CD14-positive monocyte (primary cell): ENCODE measurements at regions of chr15 and their contacts with region 1.

Region 1: DNA sequence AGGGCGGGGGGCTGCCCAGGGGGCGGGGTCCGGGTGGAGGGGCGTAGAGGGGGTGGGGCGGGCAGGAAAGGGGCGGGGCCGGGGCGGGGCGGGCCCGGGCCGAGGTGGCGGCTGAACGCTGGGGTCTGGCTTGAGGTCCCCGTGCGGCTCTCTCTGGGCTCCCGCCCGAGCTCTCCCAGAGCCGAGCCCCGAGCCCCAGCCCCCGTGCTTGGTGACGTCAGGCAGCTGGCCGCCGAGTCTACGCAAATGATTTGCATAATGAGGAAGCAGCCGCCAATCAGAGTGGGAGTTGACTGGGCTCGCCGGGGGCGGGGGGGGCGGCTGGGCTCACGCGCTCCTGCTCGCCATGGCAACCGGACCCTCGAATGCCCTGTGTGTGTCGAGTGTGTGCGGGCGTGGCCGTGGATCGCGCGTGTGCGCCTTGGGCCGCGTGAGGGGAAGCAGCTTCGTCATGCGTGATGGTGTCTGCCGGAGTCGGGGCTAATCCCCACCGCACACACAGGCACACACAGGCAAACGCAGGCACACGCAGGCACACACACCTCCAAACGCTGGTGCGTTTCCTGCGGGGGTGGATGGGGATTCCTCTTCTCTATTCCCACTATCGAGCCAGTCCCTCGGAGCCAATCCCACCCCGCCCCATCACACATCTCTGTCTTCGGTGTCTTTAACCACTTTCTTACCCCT is at the start of gene CELF6:
- DNase-seq: peak; percentile 87 to 96 (median 91)
- H3K4me3 ChIP-seq: peak within 1 kb of the TSS; percentile 22 to 63 (median 26)
- H3K4me3 Mint-ChIP-seq: peak within 1 kb of the TSS; percentile 75 to 89
- H3K27ac ChIP-seq: peak within 1 kb of the TSS in 1 of 2 donors; percentile 20
- H3K27ac Mint-ChIP-seq: peak within 1 kb of the TSS; percentile 15 to 92 (median 85)
- H3K4me1 ChIP-seq: peaks cover 8% of the 10 kb centered on the region in 2 donors
- H3K4me1 Mint-ChIP-seq: peaks cover 20% of the 10 kb centered on the region
- H3K27me3 ChIP-seq: peaks cover 0 to 11% of the 10 kb centered on the region in 2 donors
- H3K27me3 Mint-ChIP-seq: peaks cover 19 to 22% (median 20%) of the 10 kb centered on the region in 3 donors
- CTCF ChIP-seq: no peak
- polyA plus RNA-seq, gene CELF6: 2.9 TPM in 1 of 3 donors, not detected in the others

Region 2: DNA sequence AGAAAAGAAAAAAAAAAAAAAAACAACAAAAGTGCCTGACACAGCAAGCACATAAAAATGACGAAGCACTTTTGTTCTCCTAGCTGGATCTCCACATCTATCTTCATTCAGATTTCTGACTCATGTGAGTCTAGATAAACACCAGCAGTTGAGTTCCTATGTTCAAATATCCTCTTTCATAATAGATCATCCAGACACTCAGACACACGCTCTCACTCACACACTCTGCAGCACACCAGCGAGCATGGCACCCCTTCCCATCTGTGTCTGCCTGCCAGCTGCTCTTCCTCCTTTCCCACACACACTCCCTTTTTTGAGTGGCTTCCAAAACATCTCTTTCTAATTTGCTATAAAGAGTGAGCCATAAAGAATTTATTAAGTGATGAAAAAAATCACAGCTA is 19.6 kb after region 1 on chr15:
- intact Hi-C with region 1: loop called (anchors 1 to 2 kb)
- DNase-seq: peak; percentile 63 to 82 (median 72)
- H3K4me3 ChIP-seq: no peak overlapping the region
- H3K4me3 Mint-ChIP-seq: no peak overlapping the region
- H3K27ac ChIP-seq: peak overlapping the region; percentile 26 to 79
- H3K27ac Mint-ChIP-seq: peak overlapping the region in 6 of 7 donors; percentile 86 to 97 (median 96)
- H3K4me1 ChIP-seq: peaks cover 18 to 20% of the 10 kb centered on the region in 2 donors
- H3K4me1 Mint-ChIP-seq: peaks cover 27% of the 10 kb centered on the region
- H3K27me3 ChIP-seq: no peaks in the 10 kb centered on the region
- H3K27me3 Mint-ChIP-seq: peaks cover 0 to 3% (median 0%) of the 10 kb centered on the region in 3 donors
- CTCF ChIP-seq: no peak

Region 3: DNA sequence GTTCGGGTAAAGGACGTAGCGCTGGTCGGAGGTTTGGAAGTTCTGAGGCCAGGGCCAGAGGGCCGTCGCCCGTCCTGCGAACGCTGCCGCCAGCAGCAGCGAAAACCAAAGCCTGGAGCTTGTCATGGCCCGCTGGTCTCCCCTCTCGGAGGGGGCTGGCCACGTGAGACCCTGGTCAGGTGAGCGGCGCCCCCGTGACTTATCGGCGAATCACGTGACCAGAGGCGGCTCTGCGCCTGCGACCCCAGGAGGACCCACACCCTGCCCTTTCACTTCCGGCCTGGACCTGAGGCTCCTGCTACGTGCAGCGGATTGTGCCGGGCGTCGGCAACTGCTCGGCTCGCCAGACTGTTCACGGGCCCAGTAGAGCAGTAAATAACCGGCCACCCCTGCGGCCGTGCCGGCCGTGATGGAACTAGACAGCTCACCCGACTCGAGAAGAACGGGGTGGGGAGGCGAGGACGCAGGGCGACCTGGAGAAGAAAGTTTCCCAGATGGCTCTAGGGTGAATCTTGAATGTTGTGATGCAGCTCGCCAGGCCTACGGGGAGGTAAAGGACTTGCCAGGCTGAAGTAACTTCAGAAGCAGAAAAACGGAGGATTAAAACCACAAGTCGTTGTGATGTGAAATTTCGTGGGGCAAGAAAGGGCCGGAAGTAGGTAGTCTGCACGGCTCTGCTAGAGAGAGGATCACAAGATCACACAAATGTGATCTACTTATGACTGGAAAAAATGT is 55.9 kb after region 1 on chr15 and contains the start of gene HEXA:
- intact Hi-C with region 1: loop called (anchors 5 to 10 kb)
- DNase-seq: peak; percentile 76 to 87 (median 86)
- H3K4me3 ChIP-seq: peak within 1 kb of the TSS; percentile 71 to 79 (median 72)
- H3K4me3 Mint-ChIP-seq: peak within 1 kb of the TSS; percentile 93 to 98
- H3K27ac ChIP-seq: peak within 1 kb of the TSS; percentile 97 to 99
- H3K27ac Mint-ChIP-seq: peak within 1 kb of the TSS; percentile 94 to 99 (median 97)
- H3K4me1 ChIP-seq: peaks cover 51 to 64% of the 10 kb centered on the region in 2 donors
- H3K4me1 Mint-ChIP-seq: peaks cover 64% of the 10 kb centered on the region
- H3K27me3 ChIP-seq: no peaks in the 10 kb centered on the region
- H3K27me3 Mint-ChIP-seq: no peaks in the 10 kb centered on the region
- CTCF ChIP-seq: no peak
- polyA plus RNA-seq, gene HEXA: 164 to 192 (median 186) TPM

Region 4: GRCh38 chr15:72473614-72474465 is 153.7 kb after region 1 on chr15 and contains the start of gene ARIH1:
- intact Hi-C with region 1: loop called (anchors 5 to 10 kb)
- DNase-seq: peak; percentile 93 to 96 (median 96)
- H3K4me3 ChIP-seq: peak within 1 kb of the TSS; percentile 74 to 94 (median 89)
- H3K4me3 Mint-ChIP-seq: peak within 1 kb of the TSS; percentile 94 to 98
- H3K27ac ChIP-seq: peak within 1 kb of the TSS; percentile 99
- H3K27ac Mint-ChIP-seq: peak within 1 kb of the TSS; percentile 98 to 99 (median 99)
- H3K4me1 ChIP-seq: peaks cover 17 to 39% of the 10 kb centered on the region in 2 donors
- H3K4me1 Mint-ChIP-seq: peaks cover 31% of the 10 kb centered on the region
- H3K27me3 ChIP-seq: no peaks in the 10 kb centered on the region
- H3K27me3 Mint-ChIP-seq: peaks cover 0 to 1% (median 0%) of the 10 kb centered on the region in 3 donors
- CTCF ChIP-seq: peak; percentile 20
- polyA plus RNA-seq, gene ARIH1: 13.5 to 47.2 (median 14.4) TPM

Region 5: DNA sequence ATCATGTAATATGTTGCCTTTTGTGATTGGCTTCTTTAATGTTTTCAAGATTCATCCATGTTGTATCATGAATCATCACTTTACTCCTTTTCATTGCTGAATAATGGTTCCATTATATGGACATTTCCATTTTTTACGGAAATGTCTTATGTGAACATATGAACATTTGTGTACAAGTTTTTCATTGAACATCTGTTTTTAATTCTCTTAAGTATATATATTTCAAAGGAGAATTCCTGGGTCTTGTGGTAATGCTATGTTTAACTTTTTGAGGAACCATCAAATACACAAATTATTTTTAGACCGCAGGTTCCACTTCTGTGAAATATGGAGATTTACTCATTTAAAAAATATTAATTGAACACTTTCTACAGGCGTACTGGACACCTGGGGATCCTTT is 239.7 kb after region 1 on chr15:
- intact Hi-C with region 1: loop called in 1 of 2 experiments (anchors 10 kb)
- DNase-seq: no peak
- H3K4me3 ChIP-seq: no peak overlapping the region
- H3K4me3 Mint-ChIP-seq: no peak overlapping the region
- H3K27ac ChIP-seq: peak overlapping the region in 1 of 2 donors; percentile 27
- H3K27ac Mint-ChIP-seq: peak overlapping the region in 1 of 7 donors; percentile 50
- H3K4me1 ChIP-seq: peaks cover 41 to 48% of the 10 kb centered on the region in 2 donors
- H3K4me1 Mint-ChIP-seq: peaks cover 49% of the 10 kb centered on the region
- H3K27me3 ChIP-seq: no peaks in the 10 kb centered on the region
- H3K27me3 Mint-ChIP-seq: no peaks in the 10 kb centered on the region
- CTCF ChIP-seq: no peak

Region 6: GRCh38 chr15:72671535-72671934 is 351.4 kb after region 1 on chr15:
- intact Hi-C with region 1: loop called in 1 of 2 experiments (anchors 10 kb)
- DNase-seq: no peak
- H3K4me3 ChIP-seq: no peak overlapping the region
- H3K4me3 Mint-ChIP-seq: peak overlapping the region in 1 of 2 donors; percentile 15
- H3K27ac ChIP-seq: no peak overlapping the region
- H3K27ac Mint-ChIP-seq: no peak overlapping the region
- H3K4me1 ChIP-seq: no peaks in the 10 kb centered on the region
- H3K4me1 Mint-ChIP-seq: peaks cover 7% of the 10 kb centered on the region
- H3K27me3 ChIP-seq: peaks cover 2% of the 10 kb centered on the region in 2 donors
- H3K27me3 Mint-ChIP-seq: peaks cover 10 to 15% (median 11%) of the 10 kb centered on the region in 3 donors
- CTCF ChIP-seq: no peak

Region 7: DNA sequence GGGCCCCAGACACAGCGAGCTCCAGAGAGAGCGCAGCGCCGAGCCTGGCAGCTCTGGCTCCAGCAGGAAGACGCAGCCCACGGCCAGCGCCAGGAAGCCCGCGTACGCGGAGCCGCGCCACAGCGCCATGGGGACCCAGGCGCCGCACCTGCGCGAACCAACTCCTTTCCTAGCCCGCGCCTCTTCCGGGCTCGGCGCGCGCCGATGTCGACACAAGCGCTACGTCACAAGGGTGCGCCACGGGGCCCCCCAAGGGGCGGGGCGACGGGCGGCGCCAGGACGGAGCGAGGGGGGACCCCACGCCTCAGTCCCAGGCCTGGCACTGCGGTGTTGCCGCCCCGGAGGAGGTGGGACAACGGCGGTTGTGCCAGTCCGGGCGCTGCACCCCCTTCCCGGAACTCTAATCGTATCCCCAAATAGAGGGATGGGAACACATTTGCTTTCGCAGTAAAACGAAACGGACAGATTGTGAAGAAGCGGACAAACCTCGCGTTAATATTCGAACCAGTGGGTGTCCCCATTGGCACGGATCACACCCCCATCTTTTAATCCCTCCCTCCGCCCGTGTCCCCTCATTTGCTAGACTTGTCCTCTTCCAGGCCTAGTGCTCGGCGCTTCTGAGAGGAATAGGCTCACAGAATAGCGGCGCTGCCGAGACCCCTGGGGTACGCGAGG is 463.6 kb after region 1 on chr15 and contains the start of gene ADPGK:
- intact Hi-C with region 1: loop called in 1 of 2 experiments (anchors 10 kb)
- DNase-seq: peak; percentile 83 to 95 (median 92)
- H3K4me3 ChIP-seq: peak within 1 kb of the TSS; percentile 73 to 91 (median 88)
- H3K4me3 Mint-ChIP-seq: peak within 1 kb of the TSS; percentile 88 to 97
- H3K27ac ChIP-seq: peak within 1 kb of the TSS; percentile 97 to 100
- H3K27ac Mint-ChIP-seq: peak within 1 kb of the TSS; percentile 97 to 100 (median 99)
- H3K4me1 ChIP-seq: peaks cover 30 to 39% of the 10 kb centered on the region in 2 donors
- H3K4me1 Mint-ChIP-seq: peaks cover 45% of the 10 kb centered on the region
- H3K27me3 ChIP-seq: no peaks in the 10 kb centered on the region
- H3K27me3 Mint-ChIP-seq: peaks cover 0 to 2% (median 1%) of the 10 kb centered on the region in 3 donors
- CTCF ChIP-seq: no peak
- polyA plus RNA-seq, gene ADPGK: 138 to 283 (median 152) TPM